OCI-LY7 (cell line): ENCODE measurements at regions of chr1 and their contacts with region 1.

Region 1: DNA sequence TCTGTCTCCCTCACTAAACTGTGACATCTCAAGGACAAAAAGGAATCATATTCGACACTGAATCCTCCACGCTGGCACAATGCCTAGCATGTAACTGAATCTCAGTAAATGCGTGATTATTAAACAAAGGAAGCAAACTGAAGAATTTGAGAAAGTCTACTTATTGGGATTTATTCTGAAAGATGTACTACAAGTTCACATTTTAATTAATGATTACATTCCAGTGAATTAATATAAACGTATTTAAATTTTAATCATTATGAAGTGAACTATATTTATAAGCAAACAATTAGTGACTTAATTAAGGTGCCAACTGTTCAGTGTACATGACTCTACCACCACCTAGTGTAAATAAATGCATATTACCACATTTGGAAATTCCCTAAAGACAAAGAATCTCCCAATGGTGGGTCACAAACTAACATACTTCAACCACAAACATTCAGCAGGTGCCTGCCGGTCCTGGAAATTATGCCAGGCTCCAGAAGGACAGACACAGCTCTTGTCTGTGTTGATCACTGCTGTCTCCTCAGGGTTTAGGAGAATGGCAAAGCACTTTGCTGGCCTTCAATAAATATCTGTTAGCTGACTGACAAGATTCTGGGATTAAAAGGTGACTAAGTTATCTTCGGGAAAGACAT is 56.3 kb downstream of the SMYD3 start:
- DNase-seq: peak; percentile 22
- H3K4me3 ChIP-seq: no peak overlapping the region
- H3K27ac ChIP-seq: no peak overlapping the region
- H3K4me1 ChIP-seq: no peaks in the 10 kb centered on the region
- CTCF ChIP-seq: peak; percentile 82

Region 2: GRCh38 chr1:245156081-245156735 is 1294.5 kb before region 1 on chr1:
- CTCF ChIA-PET with region 1: interaction called, 6 read pairs
- POLR2A ChIA-PET with region 1: no interaction called
- intact Hi-C with region 1: loop called (anchors 5 kb)
- DNase-seq: peak; percentile 85
- H3K4me3 ChIP-seq: peak overlapping the region; percentile 66
- H3K27ac ChIP-seq: no peak overlapping the region
- H3K4me1 ChIP-seq: peaks cover 7% of the 10 kb centered on the region
- CTCF ChIP-seq: peak; percentile 72

Region 3: DNA sequence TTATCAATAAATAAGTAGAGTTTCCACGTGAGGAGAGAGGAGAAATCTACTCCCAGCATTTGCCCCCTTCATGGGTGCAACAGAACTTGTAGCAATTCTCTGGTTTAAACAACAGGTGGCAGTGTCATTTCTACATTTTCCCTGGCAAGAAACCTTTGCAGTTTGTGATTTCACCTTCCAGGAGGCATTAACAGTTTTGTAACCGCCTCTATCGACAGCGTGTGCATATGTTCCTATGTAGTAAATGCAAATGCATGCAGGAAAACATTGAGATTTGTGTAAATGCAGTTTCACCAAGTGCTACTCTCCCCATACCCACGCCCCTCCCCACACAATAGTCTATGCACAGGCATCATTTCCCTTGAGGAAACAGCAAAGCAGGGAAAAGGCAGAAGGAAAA is 438.4 kb before region 1 on chr1:
- CTCF ChIA-PET with region 1: no interaction called
- POLR2A ChIA-PET with region 1: no interaction called
- intact Hi-C with region 1: loop called (anchors 5 kb)
- DNase-seq: peak; percentile 26
- H3K4me3 ChIP-seq: no peak overlapping the region
- H3K27ac ChIP-seq: no peak overlapping the region
- H3K4me1 ChIP-seq: no peaks in the 10 kb centered on the region
- CTCF ChIP-seq: peak; percentile 68